Activated CD8-positive, alpha-beta T cell treated with anti-CD3 and anti-CD28 coated beads, Interleukin-2, amount 10 ng/mL, durations not matched to agents 7 days and 5 days (primary cell): ENCODE measurements at regions of chr16 and their contacts with region 1.

Region 1: GRCh38 chr16:22190776-22191531 is 15.1 kb upstream of the EEF2K start:
- DNase-seq: peak; percentile 100
- ATAC-seq: peak; percentile 63
- H3K4me3 Mint-ChIP-seq: peak overlapping the region; percentile 91
- H3K27ac Mint-ChIP-seq: peak overlapping the region; percentile 99
- H3K4me1 Mint-ChIP-seq: peaks cover 59% of the 10 kb centered on the region
- H3K27me3 Mint-ChIP-seq: no peaks in the 10 kb centered on the region

Region 2: DNA sequence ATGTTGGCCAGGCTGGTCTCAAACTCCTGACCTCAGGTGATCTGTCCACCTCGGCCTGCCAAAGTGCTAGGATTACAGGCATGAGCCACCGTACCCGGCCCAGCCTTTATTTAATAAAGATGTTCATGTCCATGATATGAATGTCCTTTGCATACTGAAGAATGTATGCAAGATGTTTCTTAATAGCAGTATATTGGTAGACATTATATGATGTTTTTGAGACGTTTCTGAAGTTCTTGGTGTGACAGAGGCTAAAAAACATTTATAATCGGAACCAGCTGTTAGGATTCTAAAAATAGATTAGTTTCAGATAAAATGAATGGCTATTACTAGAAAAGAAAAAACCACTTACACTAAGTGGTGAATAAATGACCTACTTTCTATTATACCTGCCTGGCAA is 201.8 kb before region 1 on chr16:
- CTCF ChIA-PET with region 1: interaction called, 10 read pairs
- POLR2A ChIA-PET with region 1: no interaction called
- DNase-seq: no peak
- ATAC-seq: no peak
- H3K4me3 Mint-ChIP-seq: no peak overlapping the region
- H3K27ac Mint-ChIP-seq: no peak overlapping the region
- H3K4me1 Mint-ChIP-seq: peaks cover 12% of the 10 kb centered on the region
- H3K27me3 Mint-ChIP-seq: no peaks in the 10 kb centered on the region

Region 3: GRCh38 chr16:22007509-22008214 is 183.3 kb before region 1 on chr16 and contains the start of gene MOSMO:
- CTCF ChIA-PET with region 1: interaction called, 41 read pairs
- POLR2A ChIA-PET with region 1: interaction called, 7 read pairs
- DNase-seq: peak; percentile 65
- ATAC-seq: peak; percentile 94
- H3K4me3 Mint-ChIP-seq: peak within 1 kb of the TSS; percentile 82
- H3K27ac Mint-ChIP-seq: peak within 1 kb of the TSS; percentile 82
- H3K4me1 Mint-ChIP-seq: peaks cover 28% of the 10 kb centered on the region
- H3K27me3 Mint-ChIP-seq: peaks cover 2% of the 10 kb centered on the region
- total RNA-seq, gene MOSMO: 11.4 to 11.9 TPM

Region 4: DNA sequence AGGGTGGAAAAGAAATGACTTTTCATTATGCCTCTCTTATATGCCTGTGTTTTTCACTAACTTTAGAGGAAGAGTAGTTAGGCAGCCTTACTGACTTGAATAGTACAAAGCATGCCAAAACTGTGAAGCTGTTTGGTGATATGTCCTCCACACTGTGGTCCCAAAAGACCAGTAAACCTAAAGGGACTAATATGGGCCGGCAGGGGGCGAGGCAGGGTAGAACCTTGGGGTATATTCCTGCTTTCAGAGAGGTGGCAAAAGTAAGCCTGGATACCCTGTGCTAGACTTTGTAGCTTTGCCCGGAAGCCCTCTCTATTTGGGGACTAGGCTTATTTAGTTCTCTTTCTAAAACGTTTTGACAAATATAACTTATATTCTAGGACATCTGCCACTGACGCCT is 135.1 kb before region 1 on chr16:
- CTCF ChIA-PET with region 1: no interaction called
- POLR2A ChIA-PET with region 1: no interaction called
- DNase-seq: no peak
- ATAC-seq: no peak
- H3K4me3 Mint-ChIP-seq: no peak overlapping the region
- H3K27ac Mint-ChIP-seq: no peak overlapping the region
- H3K4me1 Mint-ChIP-seq: peaks cover 23% of the 10 kb centered on the region
- H3K27me3 Mint-ChIP-seq: no peaks in the 10 kb centered on the region

Region 5: DNA sequence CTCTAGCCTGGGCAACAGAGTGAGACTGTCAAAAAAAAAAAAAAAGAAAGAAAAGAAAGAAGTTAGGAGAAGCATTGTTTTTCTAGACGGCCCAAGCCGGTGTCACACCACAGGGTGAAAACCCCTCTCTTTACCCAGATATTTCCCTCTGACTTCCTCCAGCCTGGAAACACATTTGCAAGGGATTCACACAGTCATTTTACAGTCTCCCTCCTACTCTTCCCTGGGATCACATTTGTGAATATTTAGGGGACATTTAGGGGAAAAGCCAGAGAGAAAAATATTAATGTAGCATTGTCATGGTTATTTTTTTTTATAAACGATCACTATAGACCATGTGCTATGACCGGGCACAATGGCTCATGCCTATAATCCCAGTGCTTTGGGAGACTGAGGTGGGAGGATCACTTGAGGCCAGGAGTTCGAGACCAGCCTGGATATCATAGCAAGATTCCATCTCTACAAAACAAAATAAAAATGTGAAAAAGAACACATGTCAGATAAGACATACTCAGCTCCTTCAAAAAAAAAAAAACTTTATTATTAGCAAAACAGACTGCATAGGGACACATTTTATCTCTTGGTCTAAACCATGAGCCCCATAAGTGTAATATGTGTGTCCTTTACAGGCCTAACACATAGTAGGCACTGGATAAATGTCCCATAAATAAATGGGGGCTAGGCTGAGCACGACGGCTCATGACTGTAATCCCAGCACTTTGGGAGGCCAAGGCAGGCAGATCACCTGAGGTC is 39.5 kb before region 1 on chr16:
- CTCF ChIA-PET with region 1: no interaction called
- POLR2A ChIA-PET with region 1: no interaction called
- DNase-seq: no peak
- ATAC-seq: no peak
- H3K4me3 Mint-ChIP-seq: no peak overlapping the region
- H3K27ac Mint-ChIP-seq: no peak overlapping the region
- H3K4me1 Mint-ChIP-seq: no peaks in the 10 kb centered on the region
- H3K27me3 Mint-ChIP-seq: no peaks in the 10 kb centered on the region

Region 6: DNA sequence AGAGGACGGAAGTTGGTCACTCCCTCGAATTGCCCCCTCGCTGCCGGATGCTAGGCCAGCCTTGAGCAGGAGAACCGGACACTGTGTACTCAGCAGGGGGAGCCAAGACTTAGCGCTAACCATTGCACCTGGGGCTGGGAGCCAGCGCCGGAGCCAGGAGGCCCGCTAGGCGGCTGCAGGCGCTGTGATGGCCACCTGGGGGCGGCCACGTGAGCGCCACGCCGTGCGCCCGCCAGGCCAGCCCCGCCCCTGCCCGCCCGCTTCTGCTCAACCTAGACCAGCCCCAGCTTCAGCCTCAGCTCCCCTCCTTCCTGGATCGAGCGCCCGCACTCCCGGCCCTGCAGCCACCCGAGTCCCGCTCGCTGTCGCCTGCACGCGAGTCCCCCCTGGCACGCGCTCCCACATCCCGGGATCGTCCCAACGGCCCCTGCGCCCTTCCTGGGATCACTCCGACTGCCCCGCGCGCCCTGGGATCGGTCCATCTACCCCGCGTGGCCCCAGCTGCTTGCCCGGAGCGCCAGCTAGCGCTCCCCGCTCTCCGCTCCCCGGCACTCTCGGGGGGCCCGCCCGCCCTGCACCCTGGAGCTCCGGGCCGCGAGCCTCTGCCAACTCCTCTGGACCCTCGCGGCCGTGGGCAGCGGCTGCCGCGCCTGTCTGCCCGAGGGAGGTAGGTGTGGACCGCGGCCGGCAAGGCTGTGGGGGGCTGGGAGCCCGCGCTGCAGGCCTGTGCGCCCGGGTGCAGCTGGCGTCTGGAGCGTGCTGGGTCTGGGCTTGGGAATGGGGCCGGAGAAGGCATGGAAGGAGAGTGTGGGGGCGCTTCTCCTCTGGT is 15.3 kb after region 1 on chr16 and contains the start of gene EEF2K:
- CTCF ChIA-PET with region 1: interaction called, 14 read pairs
- POLR2A ChIA-PET with region 1: interaction called, 7 read pairs
- DNase-seq: peak; percentile 90
- ATAC-seq: peak; percentile 94
- H3K4me3 Mint-ChIP-seq: peak within 1 kb of the TSS; percentile 80
- H3K27ac Mint-ChIP-seq: peak within 1 kb of the TSS; percentile 78
- H3K4me1 Mint-ChIP-seq: peaks cover 40% of the 10 kb centered on the region
- H3K27me3 Mint-ChIP-seq: no peaks in the 10 kb centered on the region
- total RNA-seq, gene EEF2K: 27.7 to 28.9 TPM

Region 7: DNA sequence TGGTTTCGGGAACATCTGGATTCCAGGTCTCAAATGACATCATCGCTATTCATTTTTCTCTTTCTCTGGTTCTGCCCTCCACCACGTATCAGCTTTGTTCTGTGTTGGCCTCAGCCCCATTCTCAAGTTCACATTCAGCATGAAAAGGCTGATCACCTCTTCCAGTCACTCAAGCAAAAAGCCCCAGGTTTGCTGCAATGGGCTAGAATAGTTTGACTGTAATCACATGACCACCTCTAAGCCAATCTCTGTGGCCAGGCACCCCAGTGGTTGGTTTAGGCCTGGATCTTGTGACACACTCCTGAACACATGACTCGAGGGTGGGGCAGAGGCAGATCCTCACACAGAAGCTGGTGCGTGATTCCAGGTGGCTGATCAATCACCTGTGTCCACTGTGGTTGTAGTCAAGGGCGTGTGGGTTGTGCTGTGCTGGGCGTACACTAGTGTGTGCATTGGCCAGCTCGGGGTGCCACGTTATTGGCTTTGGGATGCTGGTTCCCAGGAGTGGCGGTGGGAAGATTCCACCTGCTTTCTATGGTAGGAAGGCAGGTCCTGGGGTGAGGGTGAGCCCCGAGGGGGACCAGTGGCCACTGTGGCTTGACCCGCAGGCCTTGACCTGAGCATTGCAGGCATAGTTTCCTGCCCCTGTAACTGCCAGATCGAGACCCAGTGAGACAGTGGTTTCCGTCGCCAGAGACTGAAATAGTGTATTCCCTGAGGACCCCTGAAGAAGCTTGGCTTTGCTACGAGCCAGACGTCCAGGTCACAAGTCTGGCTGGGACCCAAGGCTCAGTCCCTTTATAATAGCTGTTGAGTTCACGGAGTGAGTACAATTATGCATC is 27.2 kb after region 1 on chr16:
- CTCF ChIA-PET with region 1: no interaction called
- POLR2A ChIA-PET with region 1: no interaction called
- DNase-seq: no peak
- ATAC-seq: peak; percentile 70
- H3K4me3 Mint-ChIP-seq: no peak overlapping the region
- H3K27ac Mint-ChIP-seq: no peak overlapping the region
- H3K4me1 Mint-ChIP-seq: peaks cover 21% of the 10 kb centered on the region
- H3K27me3 Mint-ChIP-seq: no peaks in the 10 kb centered on the region

Region 8: GRCh38 chr16:22284637-22285036 is 93.7 kb after region 1 on chr16:
- CTCF ChIA-PET with region 1: no interaction called
- POLR2A ChIA-PET with region 1: no interaction called
- DNase-seq: no peak
- ATAC-seq: no peak
- H3K4me3 Mint-ChIP-seq: no peak overlapping the region
- H3K27ac Mint-ChIP-seq: no peak overlapping the region
- H3K4me1 Mint-ChIP-seq: no peaks in the 10 kb centered on the region
- H3K27me3 Mint-ChIP-seq: no peaks in the 10 kb centered on the region